ENCODE measurements at regions of chr20 and their contacts with region 1.

Region 1: DNA sequence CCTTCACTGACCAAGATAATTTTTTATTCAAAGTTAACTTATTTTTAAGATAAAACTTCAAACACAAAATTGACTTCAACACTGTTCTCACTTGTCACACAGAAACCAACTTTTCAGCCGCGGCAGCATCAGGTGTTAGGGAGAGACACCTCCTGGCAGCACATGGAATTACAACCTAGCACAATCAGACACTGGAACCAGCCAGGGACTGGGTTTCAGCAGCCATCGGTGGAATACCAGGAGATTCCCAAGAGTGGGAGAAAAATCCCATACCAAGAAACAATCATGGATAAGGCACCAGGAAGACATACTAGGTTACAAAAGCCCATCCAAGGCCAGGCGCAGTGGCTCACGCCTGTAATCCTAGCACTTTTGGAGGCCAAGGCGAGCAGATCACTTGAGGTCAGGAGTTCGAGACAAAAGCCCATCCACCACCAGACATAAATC is 70.0 kb downstream of the SNX5 start:
- DNase-seq: peak; percentile 71
- ATAC-seq: peak; percentile 41 to 49

Region 2: DNA sequence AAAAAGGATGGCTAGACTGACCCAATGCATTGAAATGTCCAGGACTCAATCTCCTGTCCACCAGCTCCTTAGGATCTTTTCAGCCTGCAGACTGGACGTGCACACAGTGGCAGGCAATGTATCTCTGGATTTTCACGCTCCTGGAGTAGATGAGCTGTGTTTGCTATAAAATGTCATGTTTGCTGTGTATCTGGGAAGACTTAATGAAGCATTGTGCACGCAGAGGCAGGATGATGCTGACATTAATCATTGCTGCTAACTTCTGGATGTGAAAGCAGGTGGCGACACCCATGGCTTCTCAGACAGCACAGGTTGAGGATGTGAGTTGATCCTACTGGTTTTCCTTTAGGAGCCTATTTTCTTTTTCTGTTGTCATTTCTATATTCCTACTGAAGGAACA is 804.8 kb before region 1 on chr20:
- intact Hi-C with region 1: no loop called
- DNase-seq: no peak
- ATAC-seq: no peak

Region 3: GRCh38 chr20:17536944-17537444 is 361.6 kb before region 1 on chr20:
- intact Hi-C with region 1: loop called in 1 of 2 experiments (anchors 2 kb)
- DNase-seq: peak; percentile 72
- ATAC-seq: peak; percentile 96 to 97

Region 4: DNA sequence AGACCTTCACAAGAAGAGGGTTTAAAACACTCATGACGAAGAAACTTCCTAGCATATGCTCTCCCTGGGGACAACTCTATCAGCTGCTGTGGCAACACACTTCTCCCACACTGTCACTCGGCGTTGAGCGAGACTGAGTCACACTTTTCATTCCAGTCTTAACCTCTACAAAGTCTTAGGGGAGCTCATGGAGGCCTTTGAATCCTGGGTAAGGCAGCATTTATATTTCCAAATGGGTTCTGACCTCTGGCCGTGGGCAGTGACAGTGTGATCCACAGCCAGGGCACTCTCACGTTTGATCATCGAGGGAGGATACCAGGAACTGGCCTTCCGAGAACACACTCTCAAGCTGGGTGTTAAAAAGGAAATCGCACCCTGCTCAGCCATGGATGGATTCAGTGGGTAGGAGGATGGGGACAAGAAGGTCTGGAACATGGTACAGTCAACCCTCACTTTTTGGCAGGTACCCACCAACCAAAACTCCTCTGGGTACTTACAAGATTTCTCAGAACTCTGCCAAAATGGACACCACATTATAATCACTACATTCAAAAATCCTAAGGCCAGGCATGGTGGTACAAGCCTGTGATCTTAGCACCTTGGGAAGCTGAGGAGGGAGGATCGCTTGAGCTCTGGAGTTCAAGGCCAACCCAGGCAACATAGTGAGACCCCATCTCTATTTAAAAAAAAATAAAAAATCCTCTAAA is 236.1 kb before region 1 on chr20:
- intact Hi-C with region 1: loop called in 1 of 2 experiments (anchors 5 kb)
- DNase-seq: peak; percentile 73
- ATAC-seq: peak; percentile 67 to 86

Region 5: DNA sequence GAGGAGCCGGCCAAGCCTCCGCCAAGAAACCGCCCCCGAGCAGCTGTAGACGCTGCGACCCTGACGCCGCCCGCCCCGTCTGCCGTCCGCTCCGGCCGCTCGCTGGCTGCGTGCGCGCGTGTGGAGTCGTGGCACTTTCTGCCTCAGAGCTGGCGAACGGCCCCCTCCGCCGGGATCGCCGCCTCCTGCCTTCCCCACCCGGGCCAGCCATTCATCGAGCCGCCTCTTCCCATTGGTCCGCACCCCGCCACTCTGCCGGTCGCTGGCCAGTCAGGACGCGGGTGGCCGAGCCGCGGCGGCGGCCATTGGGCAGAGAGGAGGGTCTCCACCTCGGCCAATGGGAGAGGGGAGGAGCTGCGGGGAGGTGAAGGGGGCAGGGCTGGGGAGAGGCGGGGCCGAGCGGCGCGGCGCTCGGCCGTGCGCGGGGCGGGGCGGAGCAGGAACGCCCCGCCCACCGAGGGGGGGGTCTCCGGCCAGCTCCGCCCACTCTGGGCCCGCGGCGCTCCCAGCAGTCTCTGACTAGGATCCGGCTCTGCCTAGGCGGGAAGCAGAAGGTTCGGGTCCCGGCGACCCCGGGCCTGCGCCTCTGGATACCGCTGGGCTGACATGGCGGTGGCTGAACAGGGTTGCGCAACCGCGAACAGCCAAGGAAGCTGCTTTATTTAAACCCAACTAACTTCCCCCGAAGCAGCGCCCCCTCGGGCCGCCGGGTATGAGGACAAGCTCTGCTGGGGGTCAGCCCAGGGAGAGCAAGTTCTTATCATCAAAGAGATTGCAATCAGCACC is 216.3 kb before region 1 on chr20 and contains the start of gene RRBP1:
- intact Hi-C with region 1: loop called (anchors 1 to 10 kb)
- DNase-seq: peak; percentile 99
- ATAC-seq: peak; percentile 95 to 97
- total RNA-seq, gene RRBP1: 68.6 to 127 TPM

Region 6: GRCh38 chr20:17943343-17943742 is 44.8 kb after region 1 on chr20:
- intact Hi-C with region 1: no loop called
- DNase-seq: no peak
- ATAC-seq: no peak

Measured in left cardiac atrium (tissue), 4 donors.